Left cardiac atrium (tissue), 4 donors: ENCODE measurements at regions of chr3 and their contacts with region 1.

Region 1: GRCh38 chr3:124492811-124493210 is 237.4 kb upstream of the UMPS start:
- DNase-seq: peak; percentile 34
- ATAC-seq: peak; percentile 65 to 81

Region 2: GRCh38 chr3:124545891-124546290 is 53.1 kb after region 1 on chr3:
- intact Hi-C with region 1: loop called (anchors 5 kb)
- DNase-seq: no peak
- ATAC-seq: no peak

Region 3: GRCh38 chr3:124552239-124552638 is 59.4 kb after region 1 on chr3:
- intact Hi-C with region 1: loop called (anchors 5 kb)
- DNase-seq: no peak
- ATAC-seq: peak in 1 of 2 donors; percentile 31

Region 4: GRCh38 chr3:124714223-124714853 is 221.5 kb after region 1 on chr3:
- intact Hi-C with region 1: no loop called
- DNase-seq: no peak
- ATAC-seq: no peak